BJ (cell line): ENCODE measurements at regions of chr1 and their contacts with region 1.

Region 1: DNA sequence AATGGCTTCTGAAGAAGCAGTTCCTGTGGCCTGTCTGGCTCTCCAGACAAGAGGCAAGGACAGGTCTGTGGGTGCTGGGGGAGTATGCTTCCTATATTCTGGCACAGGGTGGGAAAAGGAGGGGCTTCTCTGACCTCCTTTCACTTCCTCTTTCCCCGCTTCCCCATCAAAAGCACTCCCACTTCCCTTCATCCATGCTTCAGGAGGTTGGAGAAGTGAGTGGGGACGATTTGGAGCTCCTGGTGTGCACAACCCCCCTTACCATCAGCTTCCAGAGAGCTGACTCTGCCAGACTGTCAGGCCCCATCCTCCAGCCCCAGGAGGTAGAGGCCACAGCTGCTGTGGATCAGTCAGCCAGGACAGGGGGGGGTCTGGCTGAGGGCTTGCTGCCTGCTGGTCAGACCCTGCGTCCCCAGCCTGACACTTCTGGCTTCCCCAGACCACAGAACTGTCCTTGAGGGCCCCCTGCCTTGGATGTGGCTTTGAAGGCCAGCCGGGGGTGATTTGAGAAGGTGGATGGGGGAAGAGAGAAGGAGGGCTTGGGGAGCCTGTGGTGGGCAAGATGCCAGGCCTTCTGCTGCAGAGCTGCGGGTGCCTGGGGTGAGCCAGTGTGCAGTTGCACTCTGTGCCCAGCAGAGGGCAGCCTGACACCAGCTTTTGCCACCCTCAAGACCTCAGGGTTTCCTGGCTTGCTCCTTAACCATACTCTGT is 21.5 kb upstream of the TMEM222 start:
- DNase-seq: peak; percentile 52
- H3K4me3 ChIP-seq: no peak overlapping the region
- H3K27me3 ChIP-seq: no peaks in the 10 kb centered on the region
- CTCF ChIP-seq: peak; percentile 97

Region 2: GRCh38 chr1:27044613-27045151 is 255.8 kb before region 1 on chr1:
- CTCF ChIA-PET with region 1: interaction called, 50 read pairs
- POLR2A ChIA-PET with region 1: no interaction called
- DNase-seq: no peak
- H3K4me3 ChIP-seq: no peak overlapping the region
- H3K27me3 ChIP-seq: no peaks in the 10 kb centered on the region
- CTCF ChIP-seq: peak; percentile 97

Region 3: GRCh38 chr1:27227765-27228164 is 72.7 kb before region 1 on chr1:
- CTCF ChIA-PET with region 1: no interaction called
- POLR2A ChIA-PET with region 1: no interaction called
- DNase-seq: no peak
- H3K4me3 ChIP-seq: no peak overlapping the region
- H3K27me3 ChIP-seq: no peaks in the 10 kb centered on the region
- CTCF ChIP-seq: no peak

Region 4: GRCh38 chr1:27284425-27285273 is 15.8 kb before region 1 on chr1:
- CTCF ChIA-PET with region 1: interaction called, 46 read pairs
- POLR2A ChIA-PET with region 1: no interaction called
- DNase-seq: no peak
- H3K4me3 ChIP-seq: no peak overlapping the region
- H3K27me3 ChIP-seq: no peaks in the 10 kb centered on the region
- CTCF ChIP-seq: peak; percentile 79

Region 5: GRCh38 chr1:27332536-27333281 is 32.2 kb after region 1 on chr1:
- CTCF ChIA-PET with region 1: interaction called, 70 read pairs
- POLR2A ChIA-PET with region 1: no interaction called
- DNase-seq: no peak
- H3K4me3 ChIP-seq: no peak overlapping the region
- H3K27me3 ChIP-seq: no peaks in the 10 kb centered on the region
- CTCF ChIP-seq: peak; percentile 93

Region 6: GRCh38 chr1:27365372-27366112 is 65.0 kb after region 1 on chr1:
- CTCF ChIA-PET with region 1: interaction called, 118 read pairs
- POLR2A ChIA-PET with region 1: interaction called, 5 read pairs
- DNase-seq: peak; percentile 65
- H3K4me3 ChIP-seq: peak overlapping the region; percentile 56
- H3K27me3 ChIP-seq: no peaks in the 10 kb centered on the region
- CTCF ChIP-seq: no peak

Region 7: GRCh38 chr1:27603681-27604578 is 303.4 kb after region 1 on chr1 and contains the start of gene AHDC1:
- CTCF ChIA-PET with region 1: interaction called, 88 read pairs
- POLR2A ChIA-PET with region 1: no interaction called
- DNase-seq: no peak
- H3K4me3 ChIP-seq: peak within 1 kb of the TSS; percentile 82
- H3K27me3 ChIP-seq: no peaks in the 10 kb centered on the region
- CTCF ChIP-seq: peak; percentile 18; the same call in 1 of the 2 replicates
- polyA plus RNA-seq, gene AHDC1: 3.5 and 4.1 TPM in 2 replicates